H1 (cell line): ENCODE measurements at regions of chr12 and their contacts with region 1.

Region 1: DNA sequence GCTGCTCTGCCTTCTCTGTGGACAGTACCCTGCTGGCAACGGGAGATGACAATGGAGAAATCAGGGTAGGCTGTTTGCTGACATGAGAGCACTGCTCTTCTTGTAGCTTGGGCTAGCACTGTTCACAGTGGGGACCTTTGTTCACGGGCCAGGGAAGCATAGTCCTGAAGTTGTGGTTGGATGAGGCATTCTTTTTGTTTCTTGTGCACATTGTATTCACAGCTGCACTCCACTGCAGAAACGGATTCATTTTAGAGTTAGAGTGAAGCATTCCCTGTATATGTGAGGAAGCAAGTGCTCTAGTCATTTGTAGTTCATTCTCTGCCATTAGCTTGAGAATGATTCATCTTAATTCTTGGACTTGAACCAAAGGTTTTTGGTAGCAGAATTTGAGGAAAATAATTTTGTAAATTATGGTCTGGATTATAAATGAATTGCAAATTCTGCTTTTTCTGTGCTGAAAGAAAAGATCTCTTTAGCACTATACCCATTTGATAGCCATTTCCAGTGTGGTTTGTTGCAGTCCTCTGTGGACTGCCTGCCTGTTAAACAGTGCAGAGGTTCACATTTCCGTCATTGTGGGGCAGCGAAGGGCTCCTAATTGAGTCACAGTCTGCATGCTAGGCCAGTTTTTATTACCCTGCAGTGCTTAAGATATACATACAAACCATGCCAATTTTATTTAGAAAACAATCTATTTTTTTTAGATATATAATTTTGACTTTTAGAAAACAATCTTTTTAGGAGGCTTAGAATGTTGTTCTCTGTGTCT is 80.6 kb downstream of the APAF1 start:
- DNase-seq: no peak
- H3K4me3 ChIP-seq: no peak overlapping the region
- H3K27ac ChIP-seq: no peak overlapping the region
- H3K4me1 ChIP-seq: no peaks in the 10 kb centered on the region
- H3K27me3 ChIP-seq: no peaks in the 10 kb centered on the region
- CTCF ChIP-seq: peak; percentile 63 to 80 (median 77)
- EP300 ChIP-seq: no peak
- POLR2A ChIP-seq: no peak
- RAD21 ChIP-seq: peak; percentile 87 to 88

Region 2: GRCh38 chr12:98678259-98678945 is 47.3 kb before region 1 on chr12:
- CTCF ChIA-PET with region 1: no interaction called
- POLR2A ChIA-PET with region 1: no interaction called
- DNase-seq: peak in 1 of 2 experiments; percentile 51
- H3K4me3 ChIP-seq: no peak overlapping the region
- H3K27ac ChIP-seq: no peak overlapping the region
- H3K4me1 ChIP-seq: no peaks in the 10 kb centered on the region
- H3K27me3 ChIP-seq: no peaks in the 10 kb centered on the region
- CTCF ChIP-seq: peak; percentile 4 to 36 (median 26); a peak in 2 of 4 replicates
- EP300 ChIP-seq: no peak
- POLR2A ChIP-seq: no peak
- RAD21 ChIP-seq: no peak

Region 3: DNA sequence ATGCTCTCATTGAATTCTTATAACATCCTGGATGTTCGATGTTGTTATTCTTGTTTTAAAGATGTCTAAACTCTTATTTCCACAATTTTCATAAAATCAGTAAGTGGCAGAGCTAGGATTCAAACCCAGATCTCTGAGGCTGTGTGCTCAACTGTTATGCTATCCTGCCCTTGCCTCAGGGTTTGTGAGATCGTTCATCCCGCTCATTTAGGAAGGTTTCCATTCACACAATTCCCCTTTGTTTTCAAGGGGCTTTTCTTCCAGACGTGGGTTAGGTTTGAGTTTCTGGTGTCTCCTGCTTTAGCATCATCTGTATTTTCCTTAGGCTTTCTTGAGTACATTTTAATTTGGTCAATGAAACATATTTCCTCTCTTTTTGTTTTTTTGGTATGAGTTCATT is 11.2 kb before region 1 on chr12:
- CTCF ChIA-PET with region 1: interaction called, 14 read pairs
- POLR2A ChIA-PET with region 1: no interaction called
- DNase-seq: no peak
- H3K4me3 ChIP-seq: no peak overlapping the region
- H3K27ac ChIP-seq: no peak overlapping the region
- H3K4me1 ChIP-seq: no peaks in the 10 kb centered on the region
- H3K27me3 ChIP-seq: no peaks in the 10 kb centered on the region
- CTCF ChIP-seq: no peak
- EP300 ChIP-seq: no peak
- POLR2A ChIP-seq: no peak
- RAD21 ChIP-seq: no peak

Region 4: DNA sequence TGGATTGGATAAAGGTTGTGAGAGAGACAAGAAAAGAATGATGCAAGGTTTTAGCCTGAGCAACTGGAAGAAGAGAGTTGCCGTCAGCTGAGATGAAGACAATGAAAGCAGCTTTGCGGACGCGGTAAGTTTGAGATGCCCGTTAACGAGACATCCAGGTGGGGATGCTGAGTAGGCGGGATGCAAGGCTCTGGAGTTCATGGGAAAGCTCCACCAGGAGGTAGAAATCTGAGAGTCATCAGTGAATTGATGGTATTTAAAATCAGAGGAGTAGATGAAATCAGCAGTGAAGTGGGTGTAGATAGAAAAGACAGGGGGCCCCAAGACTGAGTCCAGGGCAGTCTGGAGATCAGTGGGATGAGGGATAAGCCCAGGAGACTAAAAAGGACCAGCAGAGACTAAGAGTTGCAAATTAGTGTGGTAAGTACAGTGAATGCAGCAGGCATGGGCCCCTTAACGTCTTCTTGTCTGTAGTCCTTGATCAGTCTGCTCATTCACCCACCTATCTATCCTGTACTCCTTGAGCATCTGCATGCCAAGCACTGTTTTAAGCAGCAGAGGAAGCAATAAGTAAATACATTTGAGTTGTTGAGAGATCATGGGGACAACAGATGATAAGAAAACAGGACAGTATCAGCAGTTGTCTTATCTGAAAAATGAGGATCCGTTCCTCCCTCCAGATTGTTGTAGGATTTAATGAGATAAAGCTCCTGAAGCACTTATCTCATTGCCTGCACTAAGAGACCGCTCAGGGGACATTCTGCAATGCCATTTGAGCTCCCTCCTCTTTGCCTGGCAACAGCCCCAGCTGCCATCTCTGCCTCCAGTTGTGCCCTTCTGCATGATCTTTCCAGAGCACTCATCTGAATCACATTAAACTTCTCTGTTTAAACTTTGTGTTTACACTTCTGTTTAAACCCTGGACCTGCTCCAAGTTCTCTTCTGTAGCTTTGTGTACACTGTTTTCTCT is 11.0 kb after region 1 on chr12:
- CTCF ChIA-PET with region 1: interaction called, 57 read pairs
- POLR2A ChIA-PET with region 1: interaction called, 3 read pairs
- DNase-seq: no peak
- H3K4me3 ChIP-seq: no peak overlapping the region
- H3K27ac ChIP-seq: no peak overlapping the region
- H3K4me1 ChIP-seq: peaks cover 0 to 3% (median under 1%) of the 10 kb centered on the region in 4 experiments; a peak in 1 of 7 replicates
- H3K27me3 ChIP-seq: no peaks in the 10 kb centered on the region
- CTCF ChIP-seq: no peak
- EP300 ChIP-seq: no peak
- POLR2A ChIP-seq: no peak
- RAD21 ChIP-seq: no peak

Region 5: GRCh38 chr12:98743347-98743953 is 17.8 kb after region 1 on chr12:
- CTCF ChIA-PET with region 1: interaction called, 57 read pairs
- POLR2A ChIA-PET with region 1: interaction called, 3 read pairs
- DNase-seq: peak in 1 of 2 experiments; percentile 63
- H3K4me3 ChIP-seq: no peak overlapping the region
- H3K27ac ChIP-seq: no peak overlapping the region
- H3K4me1 ChIP-seq: peaks cover 0 to 12% (median 3%) of the 10 kb centered on the region in 4 experiments; a peak in 5 of 7 replicates
- H3K27me3 ChIP-seq: peaks cover 0 to 12% (median 7%) of the 10 kb centered on the region in 4 experiments; a peak in 5 of 7 replicates
- CTCF ChIP-seq: peak; percentile 63 to 85 (median 74)
- EP300 ChIP-seq: no peak
- POLR2A ChIP-seq: no peak
- RAD21 ChIP-seq: peak; percentile 50 to 62

Region 6: DNA sequence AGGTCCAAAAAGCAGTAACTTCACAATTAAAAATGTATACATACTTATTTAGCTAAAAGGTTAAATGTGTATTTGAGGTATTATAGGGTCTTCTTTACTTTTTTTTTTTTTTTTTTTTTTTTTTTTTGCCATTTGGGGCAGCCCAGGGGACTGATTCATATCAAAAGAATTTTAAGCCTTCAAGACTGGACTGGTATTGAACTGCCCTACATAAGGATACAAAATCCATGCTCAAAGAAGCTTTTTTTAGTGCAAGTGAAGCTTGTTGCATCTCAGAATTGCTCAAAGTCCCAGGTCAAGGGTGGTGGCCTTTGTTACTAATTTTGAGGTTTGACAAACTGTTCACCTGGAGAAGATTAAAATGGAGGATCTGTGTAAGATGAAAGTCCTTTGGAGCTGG is 43.4 kb after region 1 on chr12:
- CTCF ChIA-PET with region 1: interaction called, 12 read pairs
- POLR2A ChIA-PET with region 1: no interaction called
- DNase-seq: no peak
- H3K4me3 ChIP-seq: no peak overlapping the region
- H3K27ac ChIP-seq: no peak overlapping the region
- H3K4me1 ChIP-seq: no peaks in the 10 kb centered on the region
- H3K27me3 ChIP-seq: no peaks in the 10 kb centered on the region
- CTCF ChIP-seq: no peak
- EP300 ChIP-seq: no peak
- POLR2A ChIP-seq: no peak
- RAD21 ChIP-seq: no peak

Region 7: GRCh38 chr12:98955277-98955676 is 229.6 kb after region 1 on chr12:
- CTCF ChIA-PET with region 1: interaction called, 10 read pairs
- POLR2A ChIA-PET with region 1: no interaction called
- DNase-seq: peak; percentile 31 to 57
- H3K4me3 ChIP-seq: no peak overlapping the region
- H3K27ac ChIP-seq: no peak overlapping the region
- H3K4me1 ChIP-seq: no peaks in the 10 kb centered on the region
- H3K27me3 ChIP-seq: no peaks in the 10 kb centered on the region
- CTCF ChIP-seq: peak in 2 of 3 experiments; percentile 56 to 63; a peak in 3 of 4 replicates
- EP300 ChIP-seq: no peak
- POLR2A ChIP-seq: no peak
- RAD21 ChIP-seq: peak; percentile 55 to 65